Activated CD4-positive, alpha-beta T cell treated with anti-CD3 and anti-CD28 coated beads, Interleukin-2, amount 10 ng/mL, durations not matched to agents 7 days and 5 days (primary cell): ENCODE measurements at regions of chr1 and their contacts with region 1.

Region 1: DNA sequence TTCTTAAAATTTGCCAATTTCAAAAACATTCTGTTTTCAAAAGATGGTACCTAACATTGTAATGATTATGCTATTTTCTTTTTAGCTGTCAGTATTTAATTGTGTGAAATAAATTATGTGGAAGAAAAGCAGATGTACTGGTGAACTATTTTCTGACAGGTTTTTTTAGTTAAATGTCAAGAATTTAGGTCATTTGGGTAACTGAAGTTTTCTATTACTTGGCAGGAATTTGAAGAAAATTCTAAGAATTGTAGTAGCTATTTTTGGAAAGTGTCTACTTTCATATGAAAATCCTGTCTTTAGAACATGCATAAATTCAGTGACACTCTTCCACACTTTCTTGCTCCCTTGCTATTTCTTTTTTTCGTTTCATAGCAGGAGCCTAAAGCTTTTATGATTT is 28.5 kb upstream of the PTPRC start:
- DNase-seq: no peak
- H3K4me3 Mint-ChIP-seq: peak overlapping the region; percentile 63
- H3K27ac Mint-ChIP-seq: peak overlapping the region; percentile 88
- H3K4me1 Mint-ChIP-seq: peaks cover 68% of the 10 kb centered on the region
- H3K27me3 Mint-ChIP-seq: no peaks in the 10 kb centered on the region

Region 2: DNA sequence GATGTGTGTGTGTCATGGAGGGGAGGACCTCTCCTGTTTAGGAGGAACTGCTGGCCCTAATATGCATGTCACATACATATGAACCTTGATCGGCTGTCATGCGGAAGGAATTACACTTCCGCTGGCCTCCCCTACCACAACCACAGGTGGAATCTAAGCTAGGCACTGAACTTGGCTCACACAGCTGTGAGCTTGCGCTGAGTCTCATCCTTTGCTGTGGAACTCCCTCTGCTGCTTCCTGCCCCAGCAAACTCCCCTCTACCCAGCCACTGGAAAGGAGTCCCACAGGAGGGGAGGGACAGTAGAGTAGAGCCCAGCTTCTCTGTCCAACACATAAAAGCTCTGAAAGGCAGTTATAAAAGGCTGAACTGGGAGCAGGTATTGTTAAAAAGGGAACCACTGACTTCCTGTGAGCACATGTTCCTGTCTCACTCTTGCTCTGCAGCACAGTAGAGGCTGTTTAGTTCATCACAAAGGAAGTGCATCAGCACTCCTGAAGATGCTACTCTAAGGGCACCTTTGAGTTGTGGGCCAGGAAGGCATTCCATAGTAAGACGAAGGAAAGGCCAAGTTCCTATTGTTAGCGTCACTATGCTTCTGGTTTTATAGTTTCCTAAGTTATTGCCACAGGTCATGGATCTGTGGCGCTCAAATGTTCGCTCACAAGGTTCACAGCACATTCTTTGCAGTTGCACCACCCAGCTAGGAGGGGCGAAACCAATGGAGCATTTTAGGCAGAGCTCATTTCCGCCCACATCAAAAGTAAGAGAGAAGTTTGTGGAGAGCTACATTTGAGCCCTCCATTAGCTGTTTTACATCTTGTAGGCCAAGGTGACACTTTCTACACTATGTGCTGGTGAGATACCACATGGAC is 10.8 kb after region 1 on chr1:
- CTCF ChIA-PET with region 1: interaction called, 36 read pairs
- POLR2A ChIA-PET with region 1: no interaction called
- DNase-seq: peak; percentile 83
- H3K4me3 Mint-ChIP-seq: peak overlapping the region; percentile 80
- H3K27ac Mint-ChIP-seq: peak overlapping the region; percentile 98
- H3K4me1 Mint-ChIP-seq: peaks cover 82% of the 10 kb centered on the region
- H3K27me3 Mint-ChIP-seq: no peaks in the 10 kb centered on the region